T-cell (primary cell): ENCODE measurements at regions of chr2 and their contacts with region 1.

Region 1: GRCh38 chr2:142220901-142221300 is 90.1 kb upstream of the LRP1B start:
- DNase-seq: no peak
- ATAC-seq: no peak
- H3K4me3 ChIP-seq: no peak overlapping the region
- H3K4me3 Mint-ChIP-seq: no peak overlapping the region
- H3K27ac ChIP-seq: no peak overlapping the region
- H3K27ac Mint-ChIP-seq: no peak overlapping the region
- H3K4me1 ChIP-seq: no peaks in the 10 kb centered on the region
- H3K4me1 Mint-ChIP-seq: no peaks in the 10 kb centered on the region
- H3K27me3 ChIP-seq: no peaks in the 10 kb centered on the region
- H3K27me3 Mint-ChIP-seq: no peaks in the 10 kb centered on the region

Region 2: GRCh38 chr2:142052220-142052863 is 168.6 kb before region 1 on chr2:
- CTCF ChIA-PET with region 1: no interaction called
- POLR2A ChIA-PET with region 1: no interaction called
- DNase-seq: no peak
- ATAC-seq: no peak
- H3K4me3 ChIP-seq: no peak overlapping the region
- H3K4me3 Mint-ChIP-seq: no peak overlapping the region
- H3K27ac ChIP-seq: no peak overlapping the region
- H3K27ac Mint-ChIP-seq: no peak overlapping the region
- H3K4me1 ChIP-seq: no peaks in the 10 kb centered on the region
- H3K4me1 Mint-ChIP-seq: no peaks in the 10 kb centered on the region
- H3K27me3 ChIP-seq: no peaks in the 10 kb centered on the region
- H3K27me3 Mint-ChIP-seq: no peaks in the 10 kb centered on the region

Region 3: GRCh38 chr2:142140434-142140845 is 80.5 kb before region 1 on chr2:
- CTCF ChIA-PET with region 1: no interaction called
- POLR2A ChIA-PET with region 1: interaction called in 1 of 2 experiments, 17 read pairs
- DNase-seq: no peak
- ATAC-seq: no peak
- H3K4me3 ChIP-seq: no peak overlapping the region
- H3K4me3 Mint-ChIP-seq: no peak overlapping the region
- H3K27ac ChIP-seq: no peak overlapping the region
- H3K27ac Mint-ChIP-seq: no peak overlapping the region
- H3K4me1 ChIP-seq: no peaks in the 10 kb centered on the region
- H3K4me1 Mint-ChIP-seq: no peaks in the 10 kb centered on the region
- H3K27me3 ChIP-seq: no peaks in the 10 kb centered on the region
- H3K27me3 Mint-ChIP-seq: no peaks in the 10 kb centered on the region